ENCODE measurements at regions of chr4 and their contacts with region 1.

Region 1: GRCh38 chr4:38034986-38035882 is 75.0 kb downstream of the PTTG2 start:
- DNase-seq: no peak
- H3K4me3 ChIP-seq: no peak overlapping the region
- H3K27ac ChIP-seq: peak overlapping the region in 3 of 4 donors; percentile 4 to 33 (median 17)
- H3K4me1 ChIP-seq: peaks cover 0 to 5% (median 2%) of the 10 kb centered on the region in 4 donors
- H3K27me3 ChIP-seq: no peaks in the 10 kb centered on the region
- CTCF ChIP-seq: peak; percentile 65 to 86 (median 68)
- EP300 ChIP-seq: no peak
- POLR2A ChIP-seq: no peak

Region 2: DNA sequence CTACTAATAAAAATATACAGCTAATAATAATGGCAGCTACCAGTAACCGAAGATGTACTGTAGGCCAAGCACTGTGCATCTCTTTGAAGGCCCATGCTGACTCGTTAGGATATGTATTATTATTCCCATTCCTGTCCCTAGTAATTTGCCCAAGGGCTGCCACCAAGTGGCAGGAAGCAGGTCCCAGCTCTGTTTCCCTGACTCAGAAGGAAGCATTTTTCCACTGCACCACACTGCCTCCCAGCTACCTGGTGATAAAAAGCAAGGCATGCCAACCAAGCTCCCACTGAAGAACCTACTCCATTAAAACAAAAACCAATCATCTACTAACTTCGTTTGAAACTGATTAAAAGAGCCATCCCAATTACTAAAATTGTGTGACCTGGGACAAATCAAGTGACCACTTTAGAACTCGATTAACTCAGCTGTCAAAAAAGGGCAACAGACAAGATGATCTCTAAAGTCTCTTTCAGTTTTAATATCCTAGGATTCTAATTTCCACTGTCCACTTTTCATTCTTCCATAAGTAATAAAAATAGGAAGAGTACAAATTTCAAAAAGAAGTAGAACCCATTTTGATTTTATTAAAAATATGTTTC is 233.1 kb before region 1 on chr4:
- in situ Hi-C with region 1: loop called (anchors 5 to 10 kb)
- intact Hi-C with region 1: no loop called
- DNase-seq: peak; percentile 68
- H3K4me3 ChIP-seq: no peak overlapping the region
- H3K27ac ChIP-seq: no peak overlapping the region
- H3K4me1 ChIP-seq: no peaks in the 10 kb centered on the region
- H3K27me3 ChIP-seq: no peaks in the 10 kb centered on the region
- CTCF ChIP-seq: peak; percentile 39 to 88 (median 56)
- EP300 ChIP-seq: no peak
- POLR2A ChIP-seq: no peak

Region 3: GRCh38 chr4:37826295-37827029 is 208.8 kb before region 1 on chr4 and contains the start of gene PGM2:
- in situ Hi-C with region 1: no loop called
- intact Hi-C with region 1: loop called (anchors 10 kb)
- DNase-seq: peak; percentile 92
- H3K4me3 ChIP-seq: peak within 1 kb of the TSS; percentile 67 to 81 (median 74)
- H3K27ac ChIP-seq: peak within 1 kb of the TSS; percentile 85 to 90 (median 88)
- H3K4me1 ChIP-seq: peaks cover 13 to 26% (median 21%) of the 10 kb centered on the region in 4 donors
- H3K27me3 ChIP-seq: no peaks in the 10 kb centered on the region
- CTCF ChIP-seq: peak in 2 of 5 experiments; percentile 10 to 17
- EP300 ChIP-seq: no peak
- POLR2A ChIP-seq: peak; percentile 91
- total RNA-seq, gene PGM2: 5.8 to 21.0 (median 14.7) TPM

Measured in transverse colon (tissue), 4 donors.